ENCODE measurements at regions of chr1 and their contacts with region 1.

Region 1: GRCh38 chr1:169466259-169467230 is 19.2 kb downstream of the SLC19A2 start:
- DNase-seq: peak in 1 of 2 experiments; percentile 56
- H3K4me3 ChIP-seq: no peak overlapping the region
- H3K4me3 Mint-ChIP-seq: no peak overlapping the region
- H3K27ac Mint-ChIP-seq: no peak overlapping the region
- H3K4me1 ChIP-seq: no peaks in the 10 kb centered on the region
- H3K4me1 Mint-ChIP-seq: no peaks in the 10 kb centered on the region
- H3K27me3 ChIP-seq: no peaks in the 10 kb centered on the region
- H3K27me3 Mint-ChIP-seq: no peaks in the 10 kb centered on the region
- CTCF ChIP-seq: peak; percentile 24 to 60

Region 2: DNA sequence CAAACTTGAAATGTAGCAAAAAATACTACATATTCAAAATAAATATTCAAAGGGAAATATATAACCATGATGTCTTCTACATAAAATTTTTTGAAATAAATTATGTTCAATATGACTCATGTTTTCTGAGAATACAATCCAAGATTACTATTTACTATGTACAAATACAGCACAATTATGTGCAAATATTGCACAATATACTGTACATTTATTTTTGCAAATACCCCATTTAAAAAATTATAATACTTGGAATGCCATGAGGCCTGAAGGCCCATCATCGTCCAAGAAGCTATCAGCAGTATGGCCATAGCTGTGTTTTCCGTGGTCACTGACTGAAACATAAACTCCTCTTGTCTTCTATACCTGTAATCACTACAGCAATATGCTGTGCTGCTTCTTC is 51.6 kb before region 1 on chr1:
- CTCF ChIA-PET with region 1: no interaction called
- POLR2A ChIA-PET with region 1: no interaction called
- intact Hi-C with region 1: no loop called
- DNase-seq: no peak
- H3K4me3 ChIP-seq: no peak overlapping the region
- H3K4me3 Mint-ChIP-seq: no peak overlapping the region
- H3K27ac Mint-ChIP-seq: no peak overlapping the region
- H3K4me1 ChIP-seq: no peaks in the 10 kb centered on the region
- H3K4me1 Mint-ChIP-seq: no peaks in the 10 kb centered on the region
- H3K27me3 ChIP-seq: no peaks in the 10 kb centered on the region
- H3K27me3 Mint-ChIP-seq: peaks cover 2% of the 10 kb centered on the region
- CTCF ChIP-seq: no peak

Region 3: GRCh38 chr1:169451218-169451845 is 15.2 kb before region 1 on chr1:
- CTCF ChIA-PET with region 1: no interaction called
- POLR2A ChIA-PET with region 1: no interaction called
- intact Hi-C with region 1: no loop called
- DNase-seq: no peak
- H3K4me3 ChIP-seq: no peak overlapping the region
- H3K4me3 Mint-ChIP-seq: no peak overlapping the region
- H3K27ac Mint-ChIP-seq: no peak overlapping the region
- H3K4me1 ChIP-seq: peaks cover 11% of the 10 kb centered on the region
- H3K4me1 Mint-ChIP-seq: peaks cover 19% of the 10 kb centered on the region
- H3K27me3 ChIP-seq: no peaks in the 10 kb centered on the region
- H3K27me3 Mint-ChIP-seq: no peaks in the 10 kb centered on the region
- CTCF ChIP-seq: no peak

Region 4: GRCh38 chr1:169485544-169486278 is 19.2 kb after region 1 on chr1 and contains the start of gene SLC19A2:
- CTCF ChIA-PET with region 1: no interaction called
- POLR2A ChIA-PET with region 1: no interaction called
- intact Hi-C with region 1: loop called (anchors 1 kb)
- DNase-seq: peak; percentile 98 to 99
- H3K4me3 ChIP-seq: peak within 1 kb of the TSS; percentile 85
- H3K4me3 Mint-ChIP-seq: peak within 1 kb of the TSS; percentile 89
- H3K27ac Mint-ChIP-seq: peak within 1 kb of the TSS; percentile 94
- H3K4me1 ChIP-seq: peaks cover 39% of the 10 kb centered on the region
- H3K4me1 Mint-ChIP-seq: peaks cover 33% of the 10 kb centered on the region
- H3K27me3 ChIP-seq: no peaks in the 10 kb centered on the region
- H3K27me3 Mint-ChIP-seq: no peaks in the 10 kb centered on the region
- CTCF ChIP-seq: peak in 1 of 2 experiments; percentile 64
- total RNA-seq, gene SLC19A2: 28.7 and 31.5 TPM in 2 replicates

Region 5: GRCh38 chr1:169529068-169529696 is 62.6 kb after region 1 on chr1:
- CTCF ChIA-PET with region 1: no interaction called
- POLR2A ChIA-PET with region 1: no interaction called
- intact Hi-C with region 1: loop called (anchors 5 kb)
- DNase-seq: peak; percentile 88 to 91
- H3K4me3 ChIP-seq: no peak overlapping the region
- H3K4me3 Mint-ChIP-seq: peak overlapping the region; percentile 57
- H3K27ac Mint-ChIP-seq: peak overlapping the region; percentile 98
- H3K4me1 ChIP-seq: peaks cover 65% of the 10 kb centered on the region
- H3K4me1 Mint-ChIP-seq: peaks cover 56% of the 10 kb centered on the region
- H3K27me3 ChIP-seq: no peaks in the 10 kb centered on the region
- H3K27me3 Mint-ChIP-seq: no peaks in the 10 kb centered on the region
- CTCF ChIP-seq: no peak